A549 (cell line): ENCODE measurements at regions of chr16 and their contacts with region 1.

Region 1: GRCh38 chr16:29700253-29700987 is 21.4 kb downstream of the QPRT start:
- DNase-seq: peak; percentile 92 to 96
- ATAC-seq: peak; percentile 93 to 94
- H3K4me3 ChIP-seq: no peak overlapping the region
- H3K27ac ChIP-seq: peak overlapping the region; percentile 34 to 55; a peak in 5 of 6 replicates
- H3K4me1 ChIP-seq: peaks cover 4% of the 10 kb centered on the region; the same call in 1 of the 3 replicates
- CTCF ChIP-seq: peak; percentile 96
- EP300 ChIP-seq: no peak
- POLR2A ChIP-seq: no peak
- RAD21 ChIP-seq: peak; percentile 94 to 95

Region 2: DNA sequence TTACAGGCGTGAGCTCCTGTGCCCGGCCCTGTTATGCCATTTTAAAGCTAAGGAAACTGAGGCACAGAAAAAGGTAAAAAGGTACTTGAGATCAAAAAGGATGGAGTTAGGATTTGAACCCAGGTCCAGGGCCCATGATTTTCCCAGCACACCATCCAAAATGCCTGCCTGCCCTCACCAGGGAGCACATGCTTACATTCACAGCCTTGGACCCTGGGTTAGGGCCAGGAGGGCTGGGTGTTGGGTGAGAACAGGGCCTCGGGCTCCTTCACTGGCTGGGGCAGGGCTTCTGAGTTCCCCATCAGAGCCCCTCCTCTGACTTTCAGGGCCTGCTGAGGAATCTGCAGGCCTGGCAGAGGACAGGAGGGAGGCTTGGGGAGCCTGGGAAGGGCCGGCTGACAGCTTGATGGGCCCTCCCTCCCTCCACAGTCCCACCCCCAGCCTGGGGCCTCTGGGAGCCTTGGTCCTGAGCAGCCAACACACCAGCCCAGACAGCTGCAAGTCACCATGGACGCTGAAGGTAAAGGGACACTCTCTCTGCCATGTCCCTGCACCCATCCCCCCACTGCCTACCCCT is 21.6 kb before region 1 on chr16 and contains the start of gene QPRT:
- CTCF ChIA-PET with region 1: interaction called, 29 read pairs
- POLR2A ChIA-PET with region 1: no interaction called
- DNase-seq: peak in 1 of 2 experiments; percentile 21
- ATAC-seq: peak; percentile 60 to 76; a peak in 5 of 6 replicates
- H3K4me3 ChIP-seq: no peak within 1 kb of the TSS
- H3K27ac ChIP-seq: peak within 1 kb of the TSS in 1 of 2 experiments; percentile 73; a peak in 3 of 6 replicates
- H3K4me1 ChIP-seq: peaks cover 4% of the 10 kb centered on the region; the same call in 1 of the 3 replicates
- CTCF ChIP-seq: no peak
- EP300 ChIP-seq: no peak
- POLR2A ChIP-seq: no peak
- RAD21 ChIP-seq: no peak
- polyA plus RNA-seq, gene QPRT: 1.9 and 2.1 TPM in 2 replicates

Region 3: GRCh38 chr16:29710227-29711219 is 10.1 kb after region 1 on chr16:
- CTCF ChIA-PET with region 1: interaction called, 33 read pairs
- POLR2A ChIA-PET with region 1: no interaction called
- DNase-seq: peak; percentile 66 to 73
- ATAC-seq: peak; percentile 97 to 98
- H3K4me3 ChIP-seq: no peak overlapping the region
- H3K27ac ChIP-seq: no peak overlapping the region
- H3K4me1 ChIP-seq: peaks cover 6% of the 10 kb centered on the region; the same call in 1 of the 3 replicates
- CTCF ChIP-seq: peak; percentile 55; the same call in 2 of the 3 replicates
- EP300 ChIP-seq: no peak
- POLR2A ChIP-seq: no peak
- RAD21 ChIP-seq: peak in 1 of 2 experiments; percentile 37; a peak in 2 of 5 replicates

Region 4: GRCh38 chr16:29729116-29729521 is 28.7 kb after region 1 on chr16:
- CTCF ChIA-PET with region 1: interaction called, 84 read pairs
- POLR2A ChIA-PET with region 1: interaction called, 4 read pairs
- DNase-seq: peak; percentile 68 to 83
- ATAC-seq: peak; percentile 96 to 98
- H3K4me3 ChIP-seq: peak overlapping the region; percentile 34; the same call in 2 of the 3 replicates
- H3K27ac ChIP-seq: peak overlapping the region; percentile 54 to 71; a peak in 4 of 6 replicates
- H3K4me1 ChIP-seq: 0 out of 3 replicates have a peak, but pooled peaks cover 3% of the 10 kb centered on the region
- CTCF ChIP-seq: peak; percentile 64
- EP300 ChIP-seq: no peak
- POLR2A ChIP-seq: no peak
- RAD21 ChIP-seq: peak; percentile 52; a peak in 4 of 5 replicates

Region 5: GRCh38 chr16:29848420-29849297 is 148.2 kb after region 1 on chr16:
- CTCF ChIA-PET with region 1: interaction called, 17 read pairs
- POLR2A ChIA-PET with region 1: no interaction called
- DNase-seq: peak; percentile 77 to 81
- ATAC-seq: peak; percentile 92 to 95
- H3K4me3 ChIP-seq: no peak overlapping the region
- H3K27ac ChIP-seq: no peak overlapping the region
- H3K4me1 ChIP-seq: no peaks in the 10 kb centered on the region
- CTCF ChIP-seq: peak; percentile 89
- EP300 ChIP-seq: no peak
- POLR2A ChIP-seq: no peak
- RAD21 ChIP-seq: peak; percentile 78 to 86

Region 6: DNA sequence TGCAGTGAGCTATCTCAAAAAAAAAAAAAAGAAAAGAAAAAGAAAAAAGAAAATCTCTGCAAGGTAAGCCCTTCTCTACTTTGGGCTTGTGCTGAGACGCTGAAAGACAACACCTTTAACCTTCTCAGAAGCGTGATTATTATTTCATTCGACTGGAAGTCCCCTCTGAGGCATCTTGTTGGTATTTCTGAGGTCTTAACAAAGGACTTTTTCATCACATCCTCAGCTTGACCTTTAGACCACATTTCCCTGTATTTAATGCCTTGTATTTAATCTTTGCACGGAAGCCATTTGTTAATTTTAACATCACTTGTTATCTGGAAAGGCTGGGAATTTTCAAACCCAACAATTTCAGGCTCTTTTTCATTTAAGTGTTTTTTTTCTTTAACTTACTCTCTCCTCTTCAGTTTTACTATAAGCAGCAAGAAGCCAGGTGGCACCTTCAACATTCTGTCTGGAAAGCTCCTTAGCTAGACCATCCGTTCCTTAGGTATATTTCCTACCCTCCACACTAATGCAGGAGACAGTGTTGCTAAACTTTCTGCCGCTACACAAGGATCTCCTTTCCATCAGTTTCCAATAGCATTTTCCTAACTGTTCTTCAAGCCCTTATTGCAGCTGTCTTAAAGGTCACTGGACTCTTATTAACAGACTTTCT is 215.3 kb after region 1 on chr16:
- CTCF ChIA-PET with region 1: no interaction called
- POLR2A ChIA-PET with region 1: no interaction called
- DNase-seq: peak; percentile 29 to 37
- ATAC-seq: peak in 1 of 2 experiments; percentile 30; a peak in 2 of 6 replicates
- H3K4me3 ChIP-seq: no peak overlapping the region
- H3K27ac ChIP-seq: peak overlapping the region in 1 of 2 experiments; percentile 58; a peak in 2 of 6 replicates
- H3K4me1 ChIP-seq: peaks cover 9% of the 10 kb centered on the region; the same call in 2 of the 3 replicates
- CTCF ChIP-seq: no peak
- EP300 ChIP-seq: no peak
- POLR2A ChIP-seq: no peak
- RAD21 ChIP-seq: no peak